Pancreas (tissue), 10 donors: ENCODE measurements at regions of chr19 and their contacts with region 1.

Region 1: DNA sequence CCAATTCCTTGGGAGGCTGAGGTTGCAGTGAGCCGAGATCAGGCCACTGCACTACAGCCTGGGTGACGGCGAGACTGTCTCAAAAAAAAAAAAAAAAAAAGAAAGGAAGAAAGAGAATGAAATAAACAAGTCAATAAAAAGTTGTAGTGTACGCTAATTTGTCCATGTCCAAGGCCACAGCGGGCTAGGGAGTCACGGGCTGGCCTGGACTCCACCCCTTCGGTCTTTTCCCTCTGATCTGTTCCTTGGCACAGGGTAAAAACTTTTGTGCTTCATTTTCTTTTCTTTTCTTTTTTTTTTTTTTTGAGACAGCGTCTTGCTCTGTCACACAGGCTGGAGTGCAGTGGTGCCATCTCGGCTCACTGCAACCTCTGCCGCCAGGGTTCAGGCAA is 19.4 kb upstream of the MKNK2 start:
- DNase-seq: peak in 1 of 6 donors; percentile 9
- ATAC-seq: peak; percentile 34 to 53 (median 49)
- H3K4me3 ChIP-seq: no peak overlapping the region
- H3K27ac ChIP-seq: no peak overlapping the region
- H3K4me1 ChIP-seq: peaks cover 0 to 6% (median 0%) of the 10 kb centered on the region in 3 donors
- H3K27me3 ChIP-seq: no peaks in the 10 kb centered on the region
- CTCF ChIP-seq: no peak

Region 2: DNA sequence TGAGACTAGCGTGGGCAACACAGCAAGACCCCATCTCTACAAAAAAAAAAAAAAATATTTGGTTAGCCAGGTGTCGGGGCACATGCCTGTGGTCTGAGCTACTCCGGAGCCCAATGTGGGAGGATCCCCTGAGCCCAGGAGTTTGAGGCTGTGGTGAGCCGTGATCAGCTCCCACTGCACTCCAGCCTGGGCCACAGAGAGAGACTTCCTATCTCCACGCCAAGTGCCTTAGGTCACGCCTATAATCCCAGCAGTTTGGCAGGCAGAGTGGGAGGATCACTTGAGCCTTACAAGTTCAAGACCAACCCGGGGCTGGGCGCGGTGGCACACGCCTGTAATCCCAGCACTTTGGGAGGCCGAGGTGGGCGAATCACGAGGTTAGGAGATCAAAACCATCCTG is 173.9 kb before region 1 on chr19:
- intact Hi-C with region 1: loop called in 1 of 3 experiments (anchors 10 kb)
- DNase-seq: no peak
- ATAC-seq: no peak
- H3K4me3 ChIP-seq: no peak overlapping the region
- H3K27ac ChIP-seq: peak overlapping the region in 1 of 4 donors; percentile 78
- H3K4me1 ChIP-seq: no peaks in the 10 kb centered on the region
- H3K27me3 ChIP-seq: no peaks in the 10 kb centered on the region
- CTCF ChIP-seq: no peak

Region 3: GRCh38 chr19:2021453-2022140 is 48.8 kb before region 1 on chr19:
- intact Hi-C with region 1: loop called in 2 of 3 experiments (anchors 5 kb)
- DNase-seq: no peak
- ATAC-seq: no peak
- H3K4me3 ChIP-seq: no peak overlapping the region
- H3K27ac ChIP-seq: no peak overlapping the region
- H3K4me1 ChIP-seq: no peaks in the 10 kb centered on the region
- H3K27me3 ChIP-seq: no peaks in the 10 kb centered on the region
- CTCF ChIP-seq: no peak

Region 4: GRCh38 chr19:2110822-2111221 is 40.4 kb after region 1 on chr19:
- intact Hi-C with region 1: no loop called
- DNase-seq: peak in 1 of 6 donors; percentile 21
- ATAC-seq: no peak
- H3K4me3 ChIP-seq: no peak overlapping the region
- H3K27ac ChIP-seq: no peak overlapping the region
- H3K4me1 ChIP-seq: no peaks in the 10 kb centered on the region
- H3K27me3 ChIP-seq: no peaks in the 10 kb centered on the region
- CTCF ChIP-seq: no peak